Activated CD4-positive, alpha-beta memory T cell treated with anti-CD3 and anti-CD28 coated beads for 36 hours (primary cell): ENCODE measurements at regions of chr3 and their contacts with region 1.

Region 1: GRCh38 chr3:69288161-69288895 is 97.6 kb downstream of the FRMD4B start:
- DNase-seq: peak; percentile 86
- H3K4me3 Mint-ChIP-seq: peak overlapping the region; percentile 31
- H3K27ac Mint-ChIP-seq: peak overlapping the region; percentile 61
- H3K4me1 Mint-ChIP-seq: peaks cover 29% of the 10 kb centered on the region
- H3K27me3 Mint-ChIP-seq: no peaks in the 10 kb centered on the region

Region 2: DNA sequence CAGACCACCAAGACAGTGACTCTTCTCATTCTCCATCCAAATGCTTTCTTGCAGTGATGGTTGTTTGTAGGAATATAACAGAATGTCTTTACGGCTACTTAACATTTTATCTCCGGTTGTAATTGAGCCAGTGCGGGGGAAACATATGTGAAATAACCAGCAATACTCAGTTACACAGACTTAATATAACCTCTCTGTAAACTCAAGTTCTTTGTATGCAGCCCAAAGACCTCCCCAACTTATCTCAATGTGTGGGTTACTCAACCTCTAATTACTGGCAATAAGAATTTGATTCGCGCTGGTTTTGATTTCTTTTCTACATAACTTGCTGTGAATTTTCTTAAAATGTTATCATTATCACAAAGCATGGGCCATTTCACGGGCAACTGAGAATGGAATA is 606.6 kb before region 1 on chr3:
- CTCF ChIA-PET with region 1: no interaction called
- POLR2A ChIA-PET with region 1: no interaction called
- intact Hi-C with region 1: no loop called
- DNase-seq: no peak
- H3K4me3 Mint-ChIP-seq: no peak overlapping the region
- H3K27ac Mint-ChIP-seq: no peak overlapping the region
- H3K4me1 Mint-ChIP-seq: no peaks in the 10 kb centered on the region
- H3K27me3 Mint-ChIP-seq: no peaks in the 10 kb centered on the region

Region 3: DNA sequence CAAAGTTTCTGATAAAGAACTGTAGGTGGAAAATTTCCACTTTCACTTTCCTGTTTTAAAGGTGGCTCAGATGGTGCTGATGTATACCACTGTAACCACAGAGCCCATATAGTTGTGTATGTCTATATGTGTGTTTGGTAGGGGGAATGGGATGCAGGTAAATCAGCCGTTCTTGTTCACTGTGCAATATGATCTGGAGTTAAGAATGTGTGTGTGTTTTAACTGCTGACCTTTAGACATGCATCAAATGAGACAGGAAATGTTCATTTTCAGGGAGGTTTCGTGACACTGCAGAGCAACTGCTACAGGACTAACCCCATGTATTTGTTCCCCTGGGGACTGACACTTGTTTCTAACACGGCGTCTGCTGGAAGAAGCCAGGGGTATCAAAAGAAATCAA is 536.4 kb before region 1 on chr3:
- CTCF ChIA-PET with region 1: no interaction called
- POLR2A ChIA-PET with region 1: no interaction called
- intact Hi-C with region 1: no loop called
- DNase-seq: no peak
- H3K4me3 Mint-ChIP-seq: no peak overlapping the region
- H3K27ac Mint-ChIP-seq: no peak overlapping the region
- H3K4me1 Mint-ChIP-seq: peaks cover 8% of the 10 kb centered on the region
- H3K27me3 Mint-ChIP-seq: no peaks in the 10 kb centered on the region

Region 4: DNA sequence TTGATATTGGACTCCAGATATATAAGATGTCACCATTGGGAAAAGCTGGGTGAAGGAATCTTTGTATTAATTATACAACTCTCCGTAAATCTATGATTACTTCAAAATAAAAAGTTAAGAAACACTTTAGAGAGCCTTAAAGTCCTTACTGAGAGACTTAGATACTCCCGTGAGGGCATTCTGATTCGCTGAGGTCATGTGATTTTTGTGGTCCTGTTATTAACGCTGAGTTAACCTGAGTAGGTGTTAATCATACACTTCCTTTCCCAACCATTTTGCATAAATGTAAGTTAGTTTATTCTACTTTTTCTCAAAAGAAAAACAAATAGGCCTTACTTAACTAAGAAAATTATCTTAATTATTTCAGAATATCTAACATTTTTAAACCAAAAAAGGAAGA is 98.8 kb before region 1 on chr3:
- CTCF ChIA-PET with region 1: no interaction called
- POLR2A ChIA-PET with region 1: no interaction called
- intact Hi-C with region 1: no loop called
- DNase-seq: no peak
- H3K4me3 Mint-ChIP-seq: no peak overlapping the region
- H3K27ac Mint-ChIP-seq: no peak overlapping the region
- H3K4me1 Mint-ChIP-seq: peaks cover 25% of the 10 kb centered on the region
- H3K27me3 Mint-ChIP-seq: no peaks in the 10 kb centered on the region

Region 5: GRCh38 chr3:69212411-69213139 is 75.8 kb before region 1 on chr3:
- CTCF ChIA-PET with region 1: interaction called, 3 read pairs
- POLR2A ChIA-PET with region 1: interaction called, 6 read pairs
- intact Hi-C with region 1: loop called (anchors 1 kb)
- DNase-seq: no peak
- H3K4me3 Mint-ChIP-seq: no peak overlapping the region
- H3K27ac Mint-ChIP-seq: peak overlapping the region; percentile 76
- H3K4me1 Mint-ChIP-seq: peaks cover 52% of the 10 kb centered on the region
- H3K27me3 Mint-ChIP-seq: no peaks in the 10 kb centered on the region

Region 6: DNA sequence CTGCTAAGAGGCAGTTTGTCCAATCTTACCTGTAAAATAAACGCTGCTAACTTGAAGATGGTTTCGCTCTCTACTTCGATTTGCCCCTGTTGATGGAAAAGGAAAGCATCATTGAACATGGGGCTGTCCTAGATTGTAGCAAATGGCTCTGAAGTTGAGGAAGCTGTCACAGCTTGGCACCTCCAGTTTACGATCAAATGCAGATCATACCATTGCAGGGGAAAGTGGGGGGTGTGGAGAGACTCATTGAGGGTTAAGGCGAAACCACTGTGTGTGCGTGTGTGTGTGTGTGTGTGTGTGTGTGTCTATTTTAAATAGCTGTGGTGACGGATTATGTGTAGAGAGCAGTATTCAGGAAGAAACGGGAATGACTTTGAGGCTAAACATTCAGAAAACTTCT is 38.3 kb before region 1 on chr3:
- CTCF ChIA-PET with region 1: no interaction called
- POLR2A ChIA-PET with region 1: interaction called, 3 read pairs
- intact Hi-C with region 1: loop called (anchors 5 kb)
- DNase-seq: peak; percentile 77
- H3K4me3 Mint-ChIP-seq: peak overlapping the region; percentile 67
- H3K27ac Mint-ChIP-seq: peak overlapping the region; percentile 53
- H3K4me1 Mint-ChIP-seq: peaks cover 14% of the 10 kb centered on the region
- H3K27me3 Mint-ChIP-seq: no peaks in the 10 kb centered on the region